Transverse colon (tissue), 4 donors: ENCODE measurements at regions of chr11 and their contacts with region 1.

Region 1: DNA sequence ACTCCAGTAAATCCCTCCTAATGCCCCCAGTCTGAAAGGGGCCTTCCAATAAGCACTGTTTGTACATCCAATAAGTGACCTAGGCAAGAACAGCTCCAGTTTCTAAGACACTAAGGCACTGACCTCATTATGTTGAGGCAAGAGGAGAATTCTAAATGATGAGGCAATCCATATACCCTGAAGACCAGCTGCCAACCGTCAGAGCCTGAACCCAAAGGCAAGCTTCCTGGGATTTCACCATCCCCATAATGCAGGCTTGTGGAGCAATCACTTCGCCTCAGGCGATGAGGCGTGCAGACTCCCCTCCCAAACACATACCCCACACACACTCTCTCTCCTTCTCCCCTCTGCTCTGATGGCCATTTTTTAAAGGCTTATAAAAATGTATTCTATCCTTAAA is 49.5 kb downstream of the LGR4 start:
- DNase-seq: peak; percentile 26
- H3K4me3 ChIP-seq: no peak overlapping the region
- H3K27ac ChIP-seq: no peak overlapping the region
- H3K4me1 ChIP-seq: peaks cover 4 to 30% (median 7%) of the 10 kb centered on the region in 4 donors
- H3K27me3 ChIP-seq: no peaks in the 10 kb centered on the region
- CTCF ChIP-seq: no peak
- EP300 ChIP-seq: no peak
- POLR2A ChIP-seq: no peak

Region 2: DNA sequence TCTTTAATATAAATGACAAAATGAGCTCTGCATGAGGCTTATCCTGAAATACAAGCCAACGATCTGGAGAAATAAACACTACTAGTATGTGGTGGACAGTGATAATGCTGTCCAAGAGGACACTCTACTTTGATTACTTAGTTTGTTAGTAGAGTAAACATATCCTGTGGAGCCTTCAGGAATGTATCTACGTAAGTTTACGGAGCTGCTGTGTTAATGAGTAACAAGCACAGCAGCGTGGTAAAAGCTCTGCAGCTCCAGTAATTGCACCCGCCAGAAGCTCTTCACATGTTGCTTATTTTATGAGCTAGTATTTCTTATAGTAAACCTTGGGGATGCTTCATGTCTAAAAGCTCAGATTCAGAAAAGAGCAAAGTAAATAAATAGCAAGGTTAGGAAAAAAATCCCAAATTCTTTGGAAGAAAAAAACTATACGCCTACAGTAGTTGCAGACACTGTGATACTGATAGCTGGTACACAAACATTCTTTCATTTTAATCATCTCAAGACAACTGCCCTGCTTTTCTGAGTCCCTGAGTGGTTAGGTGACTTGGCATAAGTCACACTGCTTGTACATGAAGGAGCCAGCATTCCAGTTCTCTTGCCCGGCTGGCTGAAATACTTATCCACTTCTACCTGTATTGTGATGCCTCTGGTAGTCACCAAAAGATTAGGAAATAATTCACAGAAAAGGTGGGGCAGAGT is 27.4 kb before region 1 on chr11:
- in situ Hi-C with region 1: no loop called
- intact Hi-C with region 1: loop called (anchors 2 kb)
- DNase-seq: peak; percentile 64
- H3K4me3 ChIP-seq: no peak overlapping the region
- H3K27ac ChIP-seq: peak overlapping the region; percentile 74 to 79 (median 79)
- H3K4me1 ChIP-seq: peaks cover 27 to 82% (median 54%) of the 10 kb centered on the region in 4 donors
- H3K27me3 ChIP-seq: no peaks in the 10 kb centered on the region
- CTCF ChIP-seq: no peak
- EP300 ChIP-seq: no peak
- POLR2A ChIP-seq: no peak

Region 3: DNA sequence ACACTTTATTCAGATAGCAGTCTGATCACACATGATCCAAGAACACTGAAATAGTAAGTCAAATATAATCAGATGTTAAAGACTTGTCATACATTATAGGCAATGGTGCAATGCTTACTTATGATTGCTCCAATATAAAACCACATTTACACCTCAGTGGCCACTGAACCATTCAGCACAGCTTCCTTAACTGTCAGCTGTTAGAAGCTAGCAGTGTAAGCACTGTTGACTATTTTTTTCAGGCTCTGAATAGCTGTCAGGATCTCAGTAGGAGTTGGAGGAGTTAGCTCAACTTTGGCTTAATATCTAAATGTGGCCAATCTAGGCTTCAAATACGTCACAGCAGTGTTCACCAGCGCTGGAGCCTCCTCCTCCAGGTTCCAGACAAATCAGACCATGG is 721.7 kb after region 1 on chr11:
- in situ Hi-C with region 1: no loop called
- intact Hi-C with region 1: no loop called
- DNase-seq: no peak
- H3K4me3 ChIP-seq: no peak overlapping the region
- H3K27ac ChIP-seq: peak overlapping the region in 1 of 4 donors; percentile 39
- H3K4me1 ChIP-seq: peaks cover 0 to 13% (median 3%) of the 10 kb centered on the region in 4 donors
- H3K27me3 ChIP-seq: no peaks in the 10 kb centered on the region
- CTCF ChIP-seq: no peak
- EP300 ChIP-seq: no peak
- POLR2A ChIP-seq: no peak